Head of caudate nucleus (tissue), 42 donors: ENCODE measurements at regions of chr17 and their contacts with region 1.

Region 1: DNA sequence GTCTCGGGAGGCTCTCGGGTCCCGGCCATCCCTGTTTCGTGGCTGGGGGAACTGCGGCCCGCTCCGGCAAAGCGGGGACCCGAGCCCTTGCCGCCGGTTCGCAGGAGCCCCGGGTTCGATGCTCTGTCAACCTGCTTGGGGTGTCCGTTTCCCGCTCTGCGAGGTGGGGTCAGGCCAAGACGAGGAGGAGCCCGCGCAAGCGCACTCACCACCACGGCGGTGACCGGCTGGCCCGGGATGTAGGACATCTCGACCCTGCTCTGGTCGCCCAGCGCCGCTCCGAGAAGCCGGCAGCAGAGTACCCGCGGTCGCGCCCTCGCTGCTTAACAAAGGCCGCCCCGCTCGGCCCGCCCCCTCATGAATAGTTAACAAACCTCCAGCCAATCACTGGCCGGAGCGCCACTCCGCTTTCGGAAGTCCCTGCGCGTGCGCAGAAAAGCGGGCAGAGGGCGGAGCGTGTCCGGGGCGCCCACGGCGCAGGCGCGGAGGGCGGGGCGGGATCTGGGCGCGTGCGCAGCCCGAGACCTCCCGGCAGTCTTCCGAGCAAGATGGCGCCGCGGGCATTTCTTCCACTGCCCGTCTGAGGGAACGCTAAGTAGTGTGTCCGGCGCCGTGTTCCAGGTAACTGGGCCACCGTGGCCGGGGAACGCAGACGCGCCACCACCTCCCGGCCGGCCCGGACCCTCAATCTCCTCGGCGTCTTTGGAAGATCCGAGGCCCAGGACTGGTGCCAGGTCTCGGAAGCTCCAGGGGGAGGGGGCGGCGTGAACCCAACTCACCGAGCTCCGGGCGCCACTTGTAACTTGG is at the starts of genes EMC6 and TAX1BP3:
- DNase-seq: peak; percentile 98 to 100 (median 99)

Region 2: DNA sequence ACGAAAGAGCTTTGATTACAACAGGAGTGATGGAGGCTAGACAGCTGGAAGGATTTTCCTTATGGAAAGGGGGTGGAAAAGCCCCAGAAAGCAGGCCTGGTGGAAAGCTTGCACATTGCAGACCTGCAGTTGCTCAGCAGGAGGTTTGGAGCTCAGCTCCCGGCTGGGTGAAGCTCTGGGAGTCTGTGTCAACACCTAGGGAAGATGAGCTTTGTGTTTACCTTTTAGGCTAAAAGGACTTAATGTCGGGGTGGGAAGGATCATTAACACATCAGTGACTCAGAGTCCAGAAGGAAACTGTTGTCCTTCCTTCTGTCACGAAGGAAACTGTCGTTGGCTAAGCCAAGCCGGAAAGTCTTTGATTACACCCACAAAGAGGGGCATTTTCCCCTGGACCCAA is 824.1 kb before region 1 on chr17:
- intact Hi-C with region 1: no loop called
- DNase-seq: no peak

Region 3: GRCh38 chr17:3048767-3049471 is 619.6 kb before region 1 on chr17:
- intact Hi-C with region 1: loop called (anchors 10 kb)
- DNase-seq: peak; percentile 95 to 100 (median 99)

Region 4: DNA sequence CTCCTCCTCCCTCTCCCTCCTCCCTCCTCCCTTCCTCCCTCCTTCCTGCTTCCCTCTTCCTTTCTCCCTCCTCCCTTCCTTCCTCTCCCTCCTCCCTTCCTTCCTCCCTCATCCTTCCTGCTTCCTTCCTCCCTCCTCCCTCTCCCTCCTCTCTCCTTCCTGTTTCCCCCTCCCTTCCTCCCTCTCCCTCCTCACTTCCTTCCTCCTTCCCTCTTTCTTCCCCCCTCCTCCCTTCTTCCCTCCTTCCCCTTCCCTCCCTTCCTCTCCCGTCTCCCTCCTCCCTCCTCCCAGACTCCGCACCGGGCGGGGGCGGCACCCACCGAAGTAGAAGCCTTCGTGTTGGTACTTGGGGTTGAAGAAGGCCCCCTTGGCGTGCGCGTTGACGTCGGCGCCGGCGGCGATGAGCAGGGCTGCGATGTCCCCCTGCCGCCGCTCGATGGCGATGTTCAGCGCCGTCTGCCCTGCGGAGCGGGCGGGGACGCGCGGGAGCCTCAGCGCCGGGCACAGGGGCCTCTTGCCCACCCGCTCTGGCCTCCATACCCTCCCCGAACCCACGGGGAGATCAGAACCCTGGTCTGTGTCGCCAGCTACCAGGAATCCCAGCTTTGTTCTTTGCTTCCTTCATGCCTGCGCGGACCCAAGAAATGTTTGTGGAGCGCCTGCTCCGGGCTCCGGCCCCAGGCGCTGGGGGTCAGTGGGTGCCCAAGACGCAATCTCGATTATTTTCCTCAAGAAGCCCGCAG is 133.1 kb before region 1 on chr17:
- intact Hi-C with region 1: loop called (anchors 10 kb)
- DNase-seq: peak; percentile 47 to 92 (median 84)

Region 5: DNA sequence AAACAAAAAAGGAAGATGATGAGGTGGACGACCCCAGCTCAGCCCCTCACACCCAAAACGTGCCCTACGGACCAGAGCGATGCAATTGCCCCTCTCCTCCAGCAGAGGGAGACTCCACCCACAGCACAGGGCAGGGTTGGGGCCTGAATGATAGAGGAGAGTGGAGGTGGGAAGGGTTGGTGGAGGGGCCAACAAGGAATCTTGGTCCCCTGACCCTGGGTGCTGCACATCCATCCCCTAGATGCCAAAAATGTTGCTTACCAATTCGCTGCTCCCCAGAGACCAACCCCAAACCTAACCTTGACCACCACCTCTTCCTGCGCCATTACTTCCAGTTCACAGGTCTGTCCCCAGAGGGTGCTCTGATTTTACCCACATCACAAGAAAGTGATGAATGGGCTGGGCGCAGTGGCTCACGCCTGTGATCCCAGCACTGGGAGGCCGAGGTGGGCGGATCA is 14.6 kb after region 1 on chr17:
- intact Hi-C with region 1: no loop called
- DNase-seq: peak in 10 of 42 donors; percentile 32 to 72 (median 45)

Region 6: GRCh38 chr17:3704931-3705717 is 36.6 kb after region 1 on chr17:
- intact Hi-C with region 1: no loop called
- DNase-seq: no peak